ENCODE measurements at regions of chr19 and their contacts with region 1.

Region 1: DNA sequence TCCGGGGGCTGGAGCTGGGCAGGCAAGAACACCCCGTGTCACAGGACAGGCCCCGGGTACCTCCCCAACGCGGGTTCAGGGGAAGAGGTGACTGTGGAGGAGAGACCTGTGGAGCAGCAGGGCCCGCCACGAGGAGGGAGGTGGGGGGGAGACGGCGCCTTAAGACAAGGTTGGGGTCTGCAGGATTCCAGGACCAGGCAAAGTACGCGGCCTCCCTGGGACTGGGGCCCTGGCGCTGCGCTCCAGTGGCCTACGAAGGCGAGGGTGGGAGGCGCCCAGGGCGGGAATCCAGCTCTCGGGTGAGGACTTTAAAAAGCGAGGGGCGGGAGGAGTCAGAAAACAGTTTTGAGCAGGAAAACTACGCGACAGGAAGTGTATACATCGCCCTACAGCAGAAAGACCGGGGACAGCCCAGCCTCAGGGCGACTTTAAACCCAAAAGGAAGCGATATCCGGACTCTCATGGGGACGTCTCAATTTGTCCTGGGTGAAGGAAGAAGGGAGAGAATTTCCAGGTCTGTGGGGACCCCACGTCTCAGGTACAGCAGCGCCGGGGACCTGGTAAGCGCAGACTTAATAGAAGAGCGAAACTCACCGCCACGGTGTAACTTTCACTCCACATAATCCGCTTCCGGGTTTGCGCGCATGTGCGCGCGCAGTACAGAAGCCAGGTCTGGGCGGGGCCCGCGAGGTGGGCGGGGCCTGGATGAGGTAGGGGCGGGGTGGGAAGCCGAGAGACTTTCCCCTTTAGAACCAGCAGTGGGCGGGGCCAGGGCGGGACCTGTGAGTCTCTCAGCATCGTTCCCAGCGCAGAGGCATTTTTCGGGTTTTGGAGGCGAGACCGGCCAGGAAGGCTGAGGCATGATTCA is at the start of gene ZNF83:
- H3K4me3 Mint-ChIP-seq: peak within 1 kb of the TSS; percentile 83
- H3K27ac Mint-ChIP-seq: peak within 1 kb of the TSS; percentile 95
- H3K4me1 Mint-ChIP-seq: peaks cover 12% of the 10 kb centered on the region
- H3K27me3 Mint-ChIP-seq: peaks cover 1% of the 10 kb centered on the region

Region 2: GRCh38 chr19:52464798-52465470 is 173.0 kb before region 1 on chr19:
- intact Hi-C with region 1: no loop called
- H3K4me3 Mint-ChIP-seq: no peak overlapping the region
- H3K27ac Mint-ChIP-seq: no peak overlapping the region
- H3K4me1 Mint-ChIP-seq: no peaks in the 10 kb centered on the region
- H3K27me3 Mint-ChIP-seq: no peaks in the 10 kb centered on the region

Region 3: GRCh38 chr19:52601025-52601973 is 36.7 kb before region 1 on chr19:
- intact Hi-C with region 1: loop called (anchors 5 kb)
- H3K4me3 Mint-ChIP-seq: peak overlapping the region; percentile 86
- H3K27ac Mint-ChIP-seq: peak overlapping the region; percentile 74
- H3K4me1 Mint-ChIP-seq: peaks cover 14% of the 10 kb centered on the region
- H3K27me3 Mint-ChIP-seq: no peaks in the 10 kb centered on the region

Region 4: GRCh38 chr19:52690369-52691214 is 52.6 kb after region 1 on chr19:
- intact Hi-C with region 1: loop called (anchors 5 kb)
- H3K4me3 Mint-ChIP-seq: peak overlapping the region; percentile 78
- H3K27ac Mint-ChIP-seq: peak overlapping the region; percentile 95
- H3K4me1 Mint-ChIP-seq: peaks cover 33% of the 10 kb centered on the region
- H3K27me3 Mint-ChIP-seq: peaks cover 3% of the 10 kb centered on the region

Measured in dendritic cell treated with granulocyte-macrophage colony-stimulating factor and Interleukin-4, amounts not matched to agents 40 ng/mL and 50 ng/mL, for 4 days (primary cell).